CD8-positive, alpha-beta T cell (primary cell): ENCODE measurements at regions of chr3 and their contacts with region 1.

Region 1: DNA sequence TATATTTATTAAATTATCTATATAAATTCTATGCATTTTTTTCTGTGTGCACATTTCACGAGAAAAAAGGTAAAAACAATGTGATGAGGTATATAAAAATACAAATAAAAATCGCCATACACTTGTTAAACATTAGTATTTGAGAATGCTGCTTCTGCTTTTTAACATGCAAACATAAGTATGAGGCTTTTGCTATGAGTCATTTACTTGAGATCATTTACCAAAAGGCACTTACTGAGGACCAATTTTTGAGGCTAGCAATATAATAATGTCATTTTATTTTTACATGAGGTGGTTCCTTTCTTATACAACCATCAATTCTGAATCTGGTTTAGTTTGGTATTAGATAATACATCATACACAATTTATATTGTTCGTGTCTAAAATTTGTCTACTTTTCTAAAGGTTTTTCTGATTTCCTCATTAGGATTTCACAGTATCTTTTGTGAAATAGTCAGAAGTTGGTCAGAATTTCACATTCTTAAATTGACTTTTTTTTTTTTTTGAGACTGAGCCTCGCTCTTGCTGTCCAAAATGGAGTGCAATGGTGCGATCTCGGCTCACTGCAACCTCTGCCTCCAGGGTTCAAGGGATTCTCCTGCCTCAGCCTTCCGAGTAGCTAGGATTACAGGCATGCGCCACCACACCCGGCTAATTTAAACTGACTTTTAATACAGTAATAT is 25.6 kb downstream of the DCUN1D1 start:
- DNase-seq: no peak
- ATAC-seq: no peak
- H3K4me3 ChIP-seq: no peak overlapping the region
- H3K4me3 Mint-ChIP-seq: no peak overlapping the region
- H3K27ac ChIP-seq: no peak overlapping the region
- H3K27ac Mint-ChIP-seq: no peak overlapping the region
- H3K4me1 ChIP-seq: no peaks in the 10 kb centered on the region
- H3K4me1 Mint-ChIP-seq: no peaks in the 10 kb centered on the region
- H3K27me3 ChIP-seq: no peaks in the 10 kb centered on the region
- H3K27me3 Mint-ChIP-seq: no peaks in the 10 kb centered on the region
- CTCF ChIP-seq: no peak

Region 2: DNA sequence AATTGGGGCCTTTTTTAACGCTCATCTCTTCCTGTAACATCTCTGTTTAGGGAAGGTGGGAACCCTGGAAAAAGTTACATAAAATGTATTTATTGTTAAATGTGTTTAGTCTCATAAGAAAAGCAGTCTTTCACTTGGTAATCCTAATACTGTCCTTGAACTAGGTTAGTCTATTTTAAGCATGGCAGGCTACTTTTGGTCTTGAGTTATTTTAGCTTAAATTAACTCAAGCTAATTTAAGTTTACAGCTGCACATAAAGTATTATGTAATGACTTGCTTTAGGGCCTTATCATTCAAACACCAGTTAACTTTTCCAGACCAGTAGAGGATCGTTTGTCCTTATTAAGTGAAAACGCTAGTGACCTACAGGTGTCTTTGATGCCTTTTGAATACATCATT is 37.6 kb before region 1 on chr3:
- CTCF ChIA-PET with region 1: no interaction called
- POLR2A ChIA-PET with region 1: no interaction called
- intact Hi-C with region 1: loop called in 1 of 2 experiments (anchors 5 kb)
- DNase-seq: no peak
- ATAC-seq: no peak
- H3K4me3 ChIP-seq: no peak overlapping the region
- H3K4me3 Mint-ChIP-seq: no peak overlapping the region
- H3K27ac ChIP-seq: no peak overlapping the region
- H3K27ac Mint-ChIP-seq: peak overlapping the region; percentile 9
- H3K4me1 ChIP-seq: peaks cover 25% of the 10 kb centered on the region
- H3K4me1 Mint-ChIP-seq: peaks cover 33% of the 10 kb centered on the region
- H3K27me3 ChIP-seq: no peaks in the 10 kb centered on the region
- H3K27me3 Mint-ChIP-seq: no peaks in the 10 kb centered on the region
- CTCF ChIP-seq: no peak